Activated CD4-positive, alpha-beta T cell treated with anti-CD3 and anti-CD28 coated beads for 36 hours (primary cell): ENCODE measurements at regions of chr6 and their contacts with region 1.

Region 1: DNA sequence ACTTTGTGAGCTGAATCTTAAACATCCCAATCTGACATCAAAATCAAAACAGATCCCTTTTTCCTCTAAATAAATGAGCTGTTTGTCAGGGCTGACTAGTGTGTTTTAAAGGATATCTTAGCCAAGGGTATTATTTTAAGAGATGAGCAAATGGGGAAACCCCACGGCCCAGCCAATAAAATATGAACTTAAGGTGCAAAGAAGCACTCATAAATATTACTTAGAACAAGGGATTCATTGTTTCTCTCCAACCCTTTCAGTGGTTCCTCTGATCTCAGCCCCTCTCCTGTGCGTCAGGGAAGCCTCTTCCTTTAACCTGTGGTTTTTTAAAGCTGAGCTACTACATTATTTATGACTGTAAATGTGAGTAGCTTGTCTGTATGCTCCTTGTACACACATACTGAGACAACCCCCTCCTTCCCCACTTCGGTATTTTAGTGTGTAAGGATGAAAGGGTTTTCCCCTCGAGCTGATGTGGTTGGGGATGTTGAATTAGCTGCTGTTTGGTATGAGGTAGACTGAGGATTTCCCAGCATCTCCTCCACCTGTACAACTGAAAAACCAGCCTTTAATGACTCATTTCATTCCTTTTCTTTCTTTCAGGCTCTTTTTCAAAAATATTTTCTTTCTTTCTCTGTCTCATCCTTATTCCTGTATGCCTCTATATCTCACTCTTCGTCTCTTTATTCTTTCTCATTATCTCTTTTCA is 6.5 kb downstream of the BMP5 start:
- DNase-seq: peak; percentile 61
- ATAC-seq: peak; percentile 98
- H3K4me3 Mint-ChIP-seq: no peak overlapping the region
- H3K27ac Mint-ChIP-seq: peak overlapping the region; percentile 47
- H3K4me1 Mint-ChIP-seq: peaks cover 10% of the 10 kb centered on the region
- H3K27me3 Mint-ChIP-seq: peaks cover 2% of the 10 kb centered on the region

Region 2: DNA sequence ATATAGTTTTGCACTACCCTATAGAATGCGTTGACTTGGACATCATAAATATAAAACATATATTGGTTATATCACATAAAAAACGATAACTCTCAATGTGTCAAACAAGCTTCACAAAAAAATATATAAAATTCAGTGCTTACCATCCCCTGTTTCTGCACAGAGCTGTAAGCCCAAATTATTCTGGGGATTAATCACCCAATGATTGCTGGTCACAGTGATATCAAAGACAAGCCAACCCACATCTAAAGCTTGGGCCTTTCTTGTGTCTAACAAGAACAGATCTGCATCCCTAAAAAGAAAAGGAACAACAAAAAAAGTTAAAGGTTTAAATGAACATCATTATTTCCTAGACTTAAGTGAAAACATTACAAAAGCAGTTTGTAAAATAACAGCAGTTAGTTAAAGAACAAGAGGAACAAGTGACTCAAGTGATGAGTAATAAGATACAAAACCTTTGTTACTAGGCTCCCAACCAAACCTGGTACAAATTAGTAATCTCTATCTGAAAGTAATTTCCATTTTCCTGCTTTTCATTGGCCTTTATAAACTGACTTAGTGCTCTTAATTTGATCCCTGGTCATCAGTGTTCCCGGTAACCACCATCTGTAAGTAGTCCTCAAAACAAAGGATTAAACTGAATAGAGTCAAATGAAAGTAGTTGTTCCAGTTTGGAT is 74.7 kb before region 1 on chr6:
- CTCF ChIA-PET with region 1: no interaction called
- POLR2A ChIA-PET with region 1: no interaction called
- intact Hi-C with region 1: loop called (anchors 5 kb)
- DNase-seq: no peak
- ATAC-seq: no peak
- H3K4me3 Mint-ChIP-seq: no peak overlapping the region
- H3K27ac Mint-ChIP-seq: no peak overlapping the region
- H3K4me1 Mint-ChIP-seq: no peaks in the 10 kb centered on the region
- H3K27me3 Mint-ChIP-seq: no peaks in the 10 kb centered on the region

Region 3: DNA sequence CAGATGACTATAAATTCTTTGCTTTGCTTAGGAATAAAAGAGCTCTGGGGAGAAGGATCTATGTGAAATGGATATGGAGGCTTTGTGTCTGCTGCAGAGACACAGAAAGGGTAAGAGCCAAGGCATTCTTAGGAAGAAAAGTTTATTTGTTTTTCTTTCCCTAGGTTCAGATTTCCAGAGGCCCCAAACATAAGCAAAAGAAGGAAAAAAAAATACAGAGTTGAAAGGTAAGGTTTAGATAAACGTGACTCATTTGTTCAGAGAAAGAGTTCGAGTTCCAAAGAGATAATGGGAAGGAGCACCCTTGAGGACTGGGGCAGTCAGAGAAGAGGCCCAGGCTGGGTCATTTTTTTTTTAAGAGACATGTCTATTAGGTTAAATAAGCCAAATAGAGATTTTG is 33.9 kb after region 1 on chr6:
- CTCF ChIA-PET with region 1: no interaction called
- POLR2A ChIA-PET with region 1: no interaction called
- intact Hi-C with region 1: no loop called
- DNase-seq: no peak
- ATAC-seq: no peak
- H3K4me3 Mint-ChIP-seq: no peak overlapping the region
- H3K27ac Mint-ChIP-seq: no peak overlapping the region
- H3K4me1 Mint-ChIP-seq: no peaks in the 10 kb centered on the region
- H3K27me3 Mint-ChIP-seq: no peaks in the 10 kb centered on the region

Region 4: GRCh38 chr6:56604186-56604585 is 735.3 kb after region 1 on chr6:
- CTCF ChIA-PET with region 1: no interaction called
- POLR2A ChIA-PET with region 1: no interaction called
- intact Hi-C with region 1: loop called in 1 of 2 experiments (anchors 5 kb)
- DNase-seq: peak; percentile 8
- ATAC-seq: peak; percentile 72
- H3K4me3 Mint-ChIP-seq: no peak overlapping the region
- H3K27ac Mint-ChIP-seq: no peak overlapping the region
- H3K4me1 Mint-ChIP-seq: peaks cover 38% of the 10 kb centered on the region
- H3K27me3 Mint-ChIP-seq: peaks cover 10% of the 10 kb centered on the region

Region 5: DNA sequence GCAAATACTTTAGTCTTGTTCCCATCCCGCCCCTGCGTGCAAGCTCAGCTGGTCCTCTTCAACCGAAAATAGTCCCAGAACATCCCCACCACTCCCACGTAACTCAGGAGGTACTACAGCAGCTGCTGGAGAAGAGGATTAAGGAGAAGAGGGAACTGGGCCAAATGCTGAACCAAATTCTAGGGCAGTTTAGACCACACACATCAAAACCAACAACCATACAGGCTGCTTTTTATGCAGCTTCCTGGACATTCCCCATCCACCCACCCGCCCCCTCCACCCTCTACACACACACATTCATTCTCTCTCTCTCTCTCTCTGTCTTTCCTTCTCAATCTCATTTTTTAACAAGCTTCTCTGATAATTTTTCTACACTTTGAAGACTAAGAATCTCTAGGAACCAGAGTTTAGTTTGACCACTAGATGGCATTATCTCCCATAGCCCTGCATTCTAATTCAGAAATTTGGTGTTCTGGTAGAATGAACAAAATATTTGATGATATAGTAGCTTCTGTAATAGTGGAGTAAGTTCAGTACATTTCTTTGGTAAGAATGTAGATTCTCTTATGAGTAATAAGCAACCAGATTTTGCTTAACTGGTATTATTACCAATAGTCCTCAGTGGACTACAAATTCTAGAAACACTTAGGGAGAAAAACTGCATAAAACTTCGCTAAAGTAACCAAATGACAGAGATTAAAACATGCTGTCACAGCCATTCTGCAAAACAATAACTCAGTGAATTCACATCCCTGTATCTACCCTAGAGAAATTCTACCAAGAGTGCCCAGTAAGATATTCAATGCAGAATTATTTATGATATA is 1033.9 kb after region 1 on chr6:
- CTCF ChIA-PET with region 1: no interaction called
- POLR2A ChIA-PET with region 1: no interaction called
- intact Hi-C with region 1: no loop called
- DNase-seq: no peak
- ATAC-seq: no peak
- H3K4me3 Mint-ChIP-seq: no peak overlapping the region
- H3K27ac Mint-ChIP-seq: no peak overlapping the region
- H3K4me1 Mint-ChIP-seq: no peaks in the 10 kb centered on the region
- H3K27me3 Mint-ChIP-seq: peaks cover 9% of the 10 kb centered on the region